HepG2 (cell line): ENCODE measurements at regions of chr3 and their contacts with region 1.

Region 1: GRCh38 chr3:71389911-71390573 is 193.5 kb downstream of the FOXP1 start:
- DNase-seq: peak; percentile 39
- ATAC-seq: peak; percentile 79
- H3K4me3 ChIP-seq: no peak overlapping the region
- H3K27ac ChIP-seq: no peak overlapping the region
- H3K4me1 ChIP-seq: peaks cover 31% of the 10 kb centered on the region
- H3K27me3 ChIP-seq: no peaks in the 10 kb centered on the region
- CTCF ChIP-seq: no peak
- EP300 ChIP-seq: no peak
- POLR2A ChIP-seq: no peak
- RAD21 ChIP-seq: no peak

Region 2: DNA sequence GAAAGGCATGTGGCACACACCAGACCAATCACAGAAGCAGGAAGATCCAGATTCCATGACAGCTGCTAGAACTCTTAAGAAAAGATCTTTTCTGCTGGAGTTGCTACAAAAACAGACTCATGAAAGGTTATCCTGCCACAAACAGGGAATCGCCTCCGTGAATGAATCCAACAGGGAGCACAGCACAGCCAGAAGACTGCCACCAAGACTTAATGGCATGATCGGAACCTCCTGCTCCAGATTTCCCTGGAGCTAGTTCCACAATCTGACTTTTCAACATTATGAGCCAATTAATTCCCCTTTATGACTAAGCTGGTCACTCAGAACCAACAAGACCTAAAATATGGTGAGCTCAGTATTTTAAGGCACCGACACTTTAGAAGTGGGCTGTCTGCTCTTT is 39.0 kb before region 1 on chr3:
- CTCF ChIA-PET with region 1: no interaction called
- POLR2A ChIA-PET with region 1: no interaction called
- in situ Hi-C with region 1: no loop called
- intact Hi-C with region 1: loop called (anchors 1 kb)
- DNase-seq: no peak
- ATAC-seq: no peak
- H3K4me3 ChIP-seq: no peak overlapping the region
- H3K27ac ChIP-seq: no peak overlapping the region
- H3K4me1 ChIP-seq: peaks cover 11% of the 10 kb centered on the region; the same call in 1 of the 2 replicates
- H3K27me3 ChIP-seq: no peaks in the 10 kb centered on the region
- CTCF ChIP-seq: no peak
- EP300 ChIP-seq: no peak
- POLR2A ChIP-seq: no peak
- RAD21 ChIP-seq: no peak

Region 3: GRCh38 chr3:71369701-71370391 is 20.2 kb before region 1 on chr3:
- CTCF ChIA-PET with region 1: no interaction called
- POLR2A ChIA-PET with region 1: no interaction called
- in situ Hi-C with region 1: no loop called
- intact Hi-C with region 1: no loop called
- DNase-seq: no peak
- ATAC-seq: no peak
- H3K4me3 ChIP-seq: no peak overlapping the region
- H3K27ac ChIP-seq: no peak overlapping the region
- H3K4me1 ChIP-seq: peaks cover 29% of the 10 kb centered on the region
- H3K27me3 ChIP-seq: no peaks in the 10 kb centered on the region
- CTCF ChIP-seq: no peak
- EP300 ChIP-seq: no peak
- POLR2A ChIP-seq: no peak
- RAD21 ChIP-seq: no peak

Region 4: DNA sequence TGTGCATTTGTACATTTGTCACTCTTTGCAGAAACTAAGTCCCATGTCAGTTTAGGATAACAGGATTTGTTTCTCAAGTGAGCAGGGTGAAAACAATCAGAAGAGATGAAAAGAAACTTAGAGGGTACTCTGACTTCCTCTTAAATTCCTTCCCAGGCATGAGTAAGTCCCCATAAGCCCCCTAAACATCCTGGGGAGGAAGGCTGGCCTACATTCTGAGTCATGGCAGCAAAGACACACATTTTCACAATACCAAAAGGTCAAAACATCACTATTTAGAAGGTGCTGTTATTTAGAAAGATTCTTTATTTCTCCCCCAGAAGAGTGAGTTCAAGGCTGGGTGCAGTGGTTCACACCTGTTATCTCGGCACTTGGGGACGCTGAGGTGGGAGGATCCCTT is 201.1 kb after region 1 on chr3:
- CTCF ChIA-PET with region 1: no interaction called
- POLR2A ChIA-PET with region 1: no interaction called
- in situ Hi-C with region 1: no loop called
- intact Hi-C with region 1: no loop called
- DNase-seq: no peak
- ATAC-seq: no peak
- H3K4me3 ChIP-seq: no peak overlapping the region
- H3K27ac ChIP-seq: no peak overlapping the region
- H3K4me1 ChIP-seq: peaks cover 4% of the 10 kb centered on the region; the same call in 1 of the 2 replicates
- H3K27me3 ChIP-seq: peaks cover 0 to 8% of the 10 kb centered on the region in 2 experiments; a peak in 2 of 5 replicates
- CTCF ChIP-seq: no peak
- EP300 ChIP-seq: no peak
- POLR2A ChIP-seq: no peak
- RAD21 ChIP-seq: no peak

Region 5: DNA sequence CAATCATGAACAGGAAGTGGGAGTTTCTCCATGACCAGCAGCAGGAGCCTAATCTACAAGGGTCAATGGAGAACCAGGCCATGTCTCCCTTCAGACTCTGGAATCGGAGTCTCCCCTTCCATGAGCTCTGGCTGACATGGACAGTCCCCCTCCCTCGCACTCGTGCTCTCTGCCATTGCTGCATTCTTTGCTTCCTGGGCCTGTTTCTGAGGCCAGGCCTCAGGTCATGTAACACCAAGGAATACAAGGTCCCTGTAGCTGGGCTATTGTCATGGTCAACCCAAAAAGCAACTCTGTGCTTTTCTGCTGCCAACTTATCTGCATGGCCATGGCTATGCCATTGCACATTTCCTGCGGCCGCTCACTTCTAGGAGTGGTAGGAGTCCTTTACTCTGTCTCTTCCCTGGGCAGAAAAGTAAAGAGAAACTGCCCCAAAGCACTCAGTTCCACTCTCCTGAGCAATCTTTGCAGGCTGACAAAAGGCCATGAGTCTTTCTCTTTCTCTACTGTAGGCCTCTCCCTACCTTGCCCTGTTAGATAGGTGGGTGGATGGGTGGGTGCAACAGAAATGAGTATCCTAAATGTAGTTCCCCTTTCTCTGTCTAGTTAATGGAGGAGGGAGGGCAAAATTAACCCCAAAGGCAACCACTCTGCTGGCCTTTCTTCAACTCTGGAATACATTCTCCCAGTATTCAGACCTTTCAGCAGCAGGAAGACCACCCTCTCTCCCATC is 435.7 kb after region 1 on chr3:
- CTCF ChIA-PET with region 1: no interaction called
- POLR2A ChIA-PET with region 1: no interaction called
- in situ Hi-C with region 1: no loop called
- intact Hi-C with region 1: no loop called
- DNase-seq: no peak
- ATAC-seq: no peak
- H3K4me3 ChIP-seq: no peak overlapping the region
- H3K27ac ChIP-seq: no peak overlapping the region
- H3K4me1 ChIP-seq: no peaks in the 10 kb centered on the region
- H3K27me3 ChIP-seq: peaks cover 0 to 5% of the 10 kb centered on the region in 2 experiments; a peak in 1 of 5 replicates
- CTCF ChIP-seq: no peak
- EP300 ChIP-seq: no peak
- POLR2A ChIP-seq: no peak
- RAD21 ChIP-seq: no peak